ENCODE measurements at regions of chr15 and their contacts with region 1.

Region 1: GRCh38 chr15:50424066-50424890 is at the start of gene USP8:
- DNase-seq: peak; percentile 99
- H3K4me3 ChIP-seq: peak within 1 kb of the TSS; percentile 68 to 93 (median 80)
- H3K27ac ChIP-seq: peak within 1 kb of the TSS; percentile 86 to 98 (median 94)
- H3K4me1 ChIP-seq: peaks cover 13 to 55% (median 46%) of the 10 kb centered on the region in 6 donors
- H3K27me3 ChIP-seq: no peaks in the 10 kb centered on the region
- CTCF ChIP-seq: no peak
- POLR2A ChIP-seq: peak; percentile 80 to 85 (median 82)
- total RNA-seq, gene USP8: 70.3 to 95.6 (median 78.0) TPM

Region 2: GRCh38 chr15:50354838-50355618 is 69.2 kb before region 1 on chr15 and contains the start of gene GABPB1:
- intact Hi-C with region 1: loop called (anchors 10 kb)
- DNase-seq: peak; percentile 97
- H3K4me3 ChIP-seq: peak within 1 kb of the TSS; percentile 65 to 89 (median 80)
- H3K27ac ChIP-seq: peak within 1 kb of the TSS; percentile 99 to 100 (median 100)
- H3K4me1 ChIP-seq: peaks cover 27 to 79% (median 59%) of the 10 kb centered on the region in 6 donors
- H3K27me3 ChIP-seq: no peaks in the 10 kb centered on the region
- CTCF ChIP-seq: no peak
- POLR2A ChIP-seq: peak in 2 of 3 donors; percentile 52 to 73
- total RNA-seq, gene GABPB1: 19.2 to 36.9 (median 23.7) TPM

Measured in spleen (tissue), 13 donors.